Activated CD4-positive, alpha-beta T cell treated with anti-CD3 and anti-CD28 coated beads, Interleukin-2, amount 10 ng/mL, durations not matched to agents 7 days and 5 days (primary cell): ENCODE measurements at regions of chr11 and their contacts with region 1.

Region 1: DNA sequence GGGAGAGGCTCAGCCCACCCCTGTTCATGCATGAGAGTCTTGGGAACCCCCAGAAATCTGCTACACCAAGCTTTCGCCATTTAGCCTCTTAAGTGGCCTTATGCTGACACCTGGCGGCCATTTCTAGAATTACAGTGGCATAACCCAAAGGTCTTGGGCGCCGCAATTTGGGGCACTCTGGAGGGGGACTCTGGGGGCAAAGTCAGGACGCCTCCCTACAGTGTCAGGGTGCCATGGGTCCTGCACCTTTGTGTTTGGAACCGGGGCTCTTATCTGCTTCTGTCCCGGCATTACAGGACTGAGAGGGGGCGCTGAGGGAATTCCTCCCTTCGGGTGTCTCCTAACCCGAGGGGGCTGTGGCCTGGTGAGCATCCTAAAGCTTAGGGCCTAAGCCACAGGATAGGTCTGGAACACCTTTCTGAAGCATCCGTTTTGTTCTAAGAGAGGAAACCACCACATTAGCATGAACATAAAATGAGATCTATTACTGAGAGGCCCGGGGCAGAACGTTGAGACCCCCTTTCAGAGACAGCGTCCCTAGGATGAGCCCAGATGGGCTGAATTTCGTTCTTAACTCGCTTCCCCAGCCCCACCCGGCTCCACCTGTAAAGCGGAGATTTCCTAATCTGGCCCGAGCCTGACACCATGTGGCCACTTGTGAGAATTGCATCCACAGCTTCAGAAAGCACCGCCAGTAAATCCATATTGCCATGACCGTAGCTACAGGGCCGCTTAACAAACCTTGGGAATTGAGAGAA is 9.3 kb downstream of the INS start:
- DNase-seq: peak; percentile 82
- H3K4me3 Mint-ChIP-seq: no peak overlapping the region
- H3K27ac Mint-ChIP-seq: no peak overlapping the region
- H3K4me1 Mint-ChIP-seq: peaks cover 5% of the 10 kb centered on the region
- H3K27me3 Mint-ChIP-seq: peaks cover 37% of the 10 kb centered on the region

Region 2: GRCh38 chr11:1652771-1653540 is 498.7 kb before region 1 on chr11:
- CTCF ChIA-PET with region 1: interaction called, 12 read pairs
- POLR2A ChIA-PET with region 1: no interaction called
- DNase-seq: peak; percentile 77
- H3K4me3 Mint-ChIP-seq: no peak overlapping the region
- H3K27ac Mint-ChIP-seq: no peak overlapping the region
- H3K4me1 Mint-ChIP-seq: no peaks in the 10 kb centered on the region
- H3K27me3 Mint-ChIP-seq: peaks cover 3% of the 10 kb centered on the region

Region 3: DNA sequence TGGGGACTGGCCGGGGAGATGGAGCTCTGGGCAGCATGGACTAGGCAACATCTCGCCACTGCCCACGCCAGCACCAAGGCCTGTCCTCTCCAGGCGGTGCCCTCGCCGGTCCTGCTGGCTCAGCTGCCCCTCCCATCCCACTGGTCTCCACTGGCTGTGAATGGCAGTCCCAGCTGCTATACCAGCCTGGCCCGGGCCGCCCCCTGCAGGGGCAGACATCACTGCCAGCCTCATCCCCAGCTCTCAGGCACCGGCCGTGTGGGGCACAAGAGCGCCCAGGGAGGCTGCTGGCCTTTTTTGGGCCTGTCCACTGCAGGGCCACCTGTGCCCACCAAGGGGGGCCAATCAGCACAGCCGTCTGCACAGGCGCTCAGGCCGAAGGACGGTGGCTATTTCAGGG is 124.0 kb before region 1 on chr11:
- CTCF ChIA-PET with region 1: interaction called, 178 read pairs
- POLR2A ChIA-PET with region 1: no interaction called
- DNase-seq: no peak
- H3K4me3 Mint-ChIP-seq: no peak overlapping the region
- H3K27ac Mint-ChIP-seq: no peak overlapping the region
- H3K4me1 Mint-ChIP-seq: no peaks in the 10 kb centered on the region
- H3K27me3 Mint-ChIP-seq: no peaks in the 10 kb centered on the region

Region 4: DNA sequence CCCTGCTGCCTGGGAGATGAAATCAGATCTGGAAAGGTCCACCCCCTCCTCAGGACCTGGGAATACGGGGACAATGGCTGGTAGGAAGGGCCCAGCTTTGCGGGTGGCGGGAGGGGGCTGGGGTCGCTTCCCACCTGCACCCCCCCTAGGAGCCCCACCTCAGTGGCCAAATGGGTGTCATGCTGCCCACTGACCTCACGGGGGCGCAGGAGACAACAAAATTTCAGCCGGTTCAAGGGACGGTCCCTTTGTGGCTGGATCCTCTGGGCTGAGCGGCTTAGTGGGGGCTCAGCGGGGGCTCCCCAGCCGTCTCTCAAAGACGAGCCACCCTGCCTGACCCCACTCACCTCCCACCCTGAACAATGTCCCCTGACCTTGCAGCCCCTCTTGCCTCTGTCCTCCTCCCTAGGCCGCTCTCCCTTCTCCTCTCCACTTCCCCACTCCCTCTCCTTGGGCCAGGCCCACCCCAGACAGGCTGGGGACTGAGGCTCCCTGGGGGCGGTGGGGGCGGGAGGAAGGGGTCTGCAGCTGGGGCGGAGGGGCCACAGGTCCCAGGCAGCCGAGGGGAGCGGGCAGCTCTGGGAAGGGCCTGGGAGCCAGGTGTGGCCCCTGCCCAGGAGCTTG is 114.7 kb before region 1 on chr11:
- CTCF ChIA-PET with region 1: interaction called, 178 read pairs
- POLR2A ChIA-PET with region 1: no interaction called
- DNase-seq: no peak
- H3K4me3 Mint-ChIP-seq: no peak overlapping the region
- H3K27ac Mint-ChIP-seq: no peak overlapping the region
- H3K4me1 Mint-ChIP-seq: no peaks in the 10 kb centered on the region
- H3K27me3 Mint-ChIP-seq: no peaks in the 10 kb centered on the region

Region 5: GRCh38 chr11:2137202-2138071 is 14.2 kb before region 1 on chr11:
- CTCF ChIA-PET with region 1: interaction called, 12 read pairs
- POLR2A ChIA-PET with region 1: interaction called, 3 read pairs
- DNase-seq: no peak
- H3K4me3 Mint-ChIP-seq: no peak overlapping the region
- H3K27ac Mint-ChIP-seq: no peak overlapping the region
- H3K4me1 Mint-ChIP-seq: peaks cover 2% of the 10 kb centered on the region
- H3K27me3 Mint-ChIP-seq: peaks cover 51% of the 10 kb centered on the region

Region 6: GRCh38 chr11:2173150-2173693 is 21.5 kb after region 1 on chr11:
- CTCF ChIA-PET with region 1: no interaction called
- POLR2A ChIA-PET with region 1: no interaction called
- DNase-seq: no peak
- H3K4me3 Mint-ChIP-seq: no peak overlapping the region
- H3K27ac Mint-ChIP-seq: no peak overlapping the region
- H3K4me1 Mint-ChIP-seq: no peaks in the 10 kb centered on the region
- H3K27me3 Mint-ChIP-seq: no peaks in the 10 kb centered on the region

Region 7: DNA sequence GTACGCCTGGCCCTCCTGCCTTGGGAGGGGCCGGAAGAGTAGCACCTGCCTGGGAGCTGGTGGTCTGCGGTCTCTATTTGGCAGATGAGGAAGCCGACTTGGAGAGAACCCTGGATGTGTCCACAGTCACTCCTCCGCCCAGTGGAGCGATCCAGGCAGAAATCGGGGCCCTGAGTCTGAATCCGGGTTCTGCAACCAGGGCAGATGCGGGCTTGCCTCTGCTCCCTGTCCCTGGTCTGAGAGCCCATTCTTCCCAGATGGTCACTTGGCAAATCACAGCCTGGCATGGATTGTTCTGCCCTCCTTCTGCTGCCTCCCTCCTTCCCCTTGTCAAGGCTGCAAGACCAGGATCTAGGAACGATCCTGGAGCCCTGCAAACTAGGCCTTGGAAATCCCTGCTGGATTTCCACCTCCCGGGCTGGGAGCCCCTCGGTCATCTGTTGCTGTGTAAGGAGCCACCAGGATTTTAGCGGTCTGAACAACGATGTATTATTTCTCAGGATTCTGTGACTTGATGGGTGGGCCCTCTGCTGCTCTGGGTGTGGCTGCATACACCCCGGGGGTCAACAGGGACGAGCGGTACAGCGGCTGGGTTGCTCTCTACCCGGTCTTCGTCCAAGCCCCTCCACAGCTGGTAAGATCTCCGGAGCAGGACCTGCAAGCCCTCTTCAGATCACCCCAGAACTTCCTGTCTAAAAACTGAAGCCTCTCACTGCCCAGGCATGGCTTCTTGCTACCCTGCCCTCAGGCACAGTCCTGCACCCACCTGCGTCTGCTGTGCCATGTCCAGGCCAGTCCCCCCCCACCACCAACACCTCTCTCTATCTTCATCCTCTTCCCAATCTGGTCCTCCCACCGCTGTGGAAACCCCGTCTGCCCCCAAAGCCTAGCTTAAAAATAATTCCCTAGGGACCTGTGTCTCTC is 120.8 kb after region 1 on chr11:
- CTCF ChIA-PET with region 1: no interaction called
- POLR2A ChIA-PET with region 1: no interaction called
- DNase-seq: no peak
- H3K4me3 Mint-ChIP-seq: no peak overlapping the region
- H3K27ac Mint-ChIP-seq: no peak overlapping the region
- H3K4me1 Mint-ChIP-seq: peaks cover 15% of the 10 kb centered on the region
- H3K27me3 Mint-ChIP-seq: peaks cover 33% of the 10 kb centered on the region